ENCODE measurements at regions of chr9 and their contacts with region 1.

Region 1: GRCh38 chr9:72364679-72365524 is at the start of gene ZFAND5:
- DNase-seq: peak; percentile 98 to 99
- ATAC-seq: peak; percentile 53 to 72
- H3K4me3 ChIP-seq: peak within 1 kb of the TSS; percentile 76 to 93 (median 85)
- H3K27ac ChIP-seq: peak within 1 kb of the TSS; percentile 94 to 99 (median 98)
- H3K4me1 ChIP-seq: peaks cover 16 to 17% of the 10 kb centered on the region in 2 donors
- H3K27me3 ChIP-seq: no peaks in the 10 kb centered on the region
- CTCF ChIP-seq: peak in 2 of 5 experiments; percentile 19 to 31
- POLR2A ChIP-seq: peak; percentile 100
- total RNA-seq, gene ZFAND5: 316 to 2,069 (median 561) TPM

Region 2: DNA sequence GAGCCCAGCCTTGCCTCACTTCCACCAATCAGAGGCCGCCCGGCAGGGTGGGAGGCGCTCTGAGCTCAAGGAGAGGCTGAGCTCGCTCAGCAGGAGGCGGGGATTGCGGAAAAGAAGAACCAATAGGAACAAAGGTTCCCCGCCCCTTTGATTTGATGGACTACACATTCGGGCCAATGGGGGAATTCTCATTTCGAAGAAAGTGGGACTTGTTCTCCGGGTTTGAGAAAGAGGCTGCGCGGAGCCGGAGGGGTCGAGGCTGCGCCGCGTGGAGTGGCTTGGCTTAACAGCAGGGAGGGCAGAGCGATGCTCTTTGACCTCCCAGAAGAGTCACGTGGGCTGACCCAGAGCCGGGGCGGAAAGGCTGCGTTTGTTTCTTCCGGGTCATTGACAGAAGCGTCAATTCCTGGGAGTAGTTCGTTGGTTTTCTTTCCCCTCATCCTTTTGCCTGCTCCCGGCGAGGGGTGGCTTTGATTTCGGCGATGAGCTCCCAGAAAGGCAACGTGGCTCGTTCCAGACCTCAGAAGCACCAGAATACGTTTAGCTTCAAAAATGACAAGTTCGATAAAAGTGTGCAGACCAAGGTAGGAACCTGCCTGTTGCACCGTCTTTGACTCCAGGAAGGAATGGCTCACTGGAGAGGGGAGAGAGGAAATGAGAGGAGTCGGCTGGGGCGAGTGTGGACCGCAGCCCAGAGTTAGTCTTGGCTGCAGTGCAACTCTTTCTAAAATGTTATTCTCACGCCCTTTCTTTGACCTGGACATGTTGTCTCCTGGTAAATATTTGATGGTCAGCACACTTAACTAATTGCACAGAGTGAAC is 453.4 kb before region 1 on chr9 and contains the start of gene C9orf85:
- in situ Hi-C with region 1: no loop called
- intact Hi-C with region 1: loop called (anchors 5 kb)
- DNase-seq: peak; percentile 99
- ATAC-seq: peak; percentile 91 to 96
- H3K4me3 ChIP-seq: peak within 1 kb of the TSS; percentile 73 to 96 (median 87)
- H3K27ac ChIP-seq: peak within 1 kb of the TSS; percentile 88 to 96 (median 92)
- H3K4me1 ChIP-seq: peaks cover 43 to 58% of the 10 kb centered on the region in 2 donors
- H3K27me3 ChIP-seq: no peaks in the 10 kb centered on the region
- CTCF ChIP-seq: no peak
- POLR2A ChIP-seq: peak in 1 of 2 donors; percentile 69
- total RNA-seq, gene C9orf85: 1.7 to 9.6 (median 6.3) TPM

Region 3: DNA sequence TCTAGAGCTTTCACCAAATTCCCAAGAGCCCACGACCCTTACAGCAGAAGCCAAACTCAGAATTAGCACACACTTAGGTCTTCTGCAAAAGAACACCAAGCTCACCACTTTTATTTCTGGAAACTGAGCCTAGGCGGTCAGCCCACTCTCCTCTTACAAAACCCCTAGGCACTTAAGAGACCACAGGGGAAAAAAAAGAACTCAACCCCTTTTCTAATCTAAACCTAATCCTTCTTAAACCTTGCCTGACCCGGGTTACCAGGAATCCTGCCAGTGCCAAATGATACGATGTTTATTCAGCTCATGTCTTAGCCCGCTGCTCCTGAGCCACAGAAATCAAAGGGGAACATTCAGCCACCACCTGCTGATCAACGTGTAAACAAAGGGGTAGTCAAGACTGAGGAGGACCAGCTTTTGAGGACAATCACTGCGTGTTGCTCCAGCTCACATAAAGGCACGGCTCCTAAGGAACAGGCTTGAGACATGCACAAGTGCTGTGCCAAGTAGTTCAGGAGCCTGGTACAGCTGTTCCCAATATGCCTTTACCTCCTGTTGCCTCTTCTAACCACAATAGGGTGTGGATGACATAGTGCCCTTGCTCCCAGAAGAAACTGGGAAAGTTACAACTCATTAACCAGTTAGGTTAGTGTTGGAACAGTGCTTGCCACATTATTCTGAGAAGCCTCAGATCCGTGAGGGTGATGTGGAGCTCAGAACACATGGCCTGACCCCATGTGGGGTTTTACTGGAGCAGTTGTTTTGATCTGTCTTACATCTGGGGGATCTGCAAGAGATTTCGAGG is 49.2 kb before region 1 on chr9:
- in situ Hi-C with region 1: no loop called
- intact Hi-C with region 1: loop called (anchors 5 kb)
- DNase-seq: peak; percentile 88 to 90
- ATAC-seq: peak; percentile 84 to 92
- H3K4me3 ChIP-seq: peak overlapping the region; percentile 24 to 55 (median 31)
- H3K27ac ChIP-seq: peak overlapping the region; percentile 88 to 89 (median 88)
- H3K4me1 ChIP-seq: peaks cover 25 to 35% of the 10 kb centered on the region in 2 donors
- H3K27me3 ChIP-seq: no peaks in the 10 kb centered on the region
- CTCF ChIP-seq: no peak
- POLR2A ChIP-seq: peak in 1 of 2 donors; percentile 34

Region 4: DNA sequence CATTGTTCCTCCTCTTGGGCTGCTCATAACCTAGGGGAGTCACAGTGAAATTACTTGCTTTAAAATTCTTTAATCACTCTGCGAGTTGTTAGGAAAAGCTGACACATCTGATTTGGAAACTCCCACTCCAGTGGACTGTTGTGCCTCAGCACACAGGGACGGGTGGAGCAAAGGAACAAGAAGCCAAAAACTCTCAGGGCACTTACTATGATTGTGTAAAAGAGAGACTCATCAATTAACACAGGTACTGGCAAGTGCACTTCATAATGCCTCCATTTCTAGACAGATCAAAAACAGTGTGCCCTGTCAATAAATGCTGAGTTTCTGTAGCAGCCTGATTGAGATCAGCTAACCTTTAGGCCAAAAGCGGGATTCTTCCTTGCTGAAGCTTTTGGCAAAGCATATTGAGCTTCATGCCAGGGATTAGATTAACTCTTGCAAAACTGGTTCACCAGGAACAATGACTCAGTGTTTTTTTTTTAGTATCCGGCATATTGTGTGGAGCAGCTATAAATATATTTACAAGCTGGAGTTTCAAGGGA is 212.4 kb after region 1 on chr9:
- in situ Hi-C with region 1: loop called in 2 of 4 experiments (anchors 10 kb)
- intact Hi-C with region 1: loop called (anchors 1 kb)
- DNase-seq: peak in 1 of 2 donors; percentile 36
- ATAC-seq: peak; percentile 70
- H3K4me3 ChIP-seq: peak overlapping the region in 3 of 4 donors; percentile 34 to 46 (median 39)
- H3K27ac ChIP-seq: peak overlapping the region; percentile 78 to 90 (median 88)
- H3K4me1 ChIP-seq: peaks cover 44 to 54% of the 10 kb centered on the region in 2 donors
- H3K27me3 ChIP-seq: no peaks in the 10 kb centered on the region
- CTCF ChIP-seq: no peak
- POLR2A ChIP-seq: peak; percentile 8 to 11